HCT116 (cell line): ENCODE measurements at regions of chr6 and their contacts with region 1.

Region 1: GRCh38 chr6:87078983-87079616 is 15.8 kb downstream of the CGA start:
- DNase-seq: peak; percentile 79
- ATAC-seq: peak; percentile 100
- H3K4me3 ChIP-seq: no peak overlapping the region
- H3K27ac ChIP-seq: no peak overlapping the region
- H3K4me1 ChIP-seq: no peaks in the 10 kb centered on the region
- H3K27me3 ChIP-seq: peaks cover 14% of the 10 kb centered on the region; the same call in 1 of the 2 replicates
- CTCF ChIP-seq: peak; percentile 40 to 99 (median 94); a peak in 5 of 6 replicates
- POLR2A ChIP-seq: no peak
- RAD21 ChIP-seq: peak; percentile 46; the same call in 1 of the 2 replicates

Region 2: DNA sequence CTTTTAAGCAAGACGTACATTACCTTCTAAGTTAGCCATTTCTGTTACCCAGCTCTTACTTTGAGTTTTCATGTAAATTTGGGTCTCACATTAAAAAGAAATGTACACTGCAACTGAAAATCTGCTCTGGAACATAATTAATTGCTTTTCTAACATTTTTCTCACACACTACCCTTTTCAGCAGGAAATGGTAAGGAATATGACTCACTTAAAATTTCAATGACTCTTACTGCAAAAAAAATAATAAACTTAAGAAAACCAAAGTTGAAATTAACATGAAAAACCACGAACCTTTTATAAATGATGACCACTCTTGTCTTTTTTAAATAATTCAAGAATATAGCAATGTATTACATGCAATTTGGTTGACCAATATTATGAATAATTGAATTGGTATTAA is 14.6 kb after region 1 on chr6:
- CTCF ChIA-PET with region 1: interaction called, 10 read pairs
- POLR2A ChIA-PET with region 1: no interaction called
- RAD21 ChIA-PET with region 1: no interaction called
- intact Hi-C with region 1: no loop called
- DNase-seq: no peak
- ATAC-seq: no peak
- H3K4me3 ChIP-seq: no peak overlapping the region
- H3K27ac ChIP-seq: no peak overlapping the region
- H3K4me1 ChIP-seq: no peaks in the 10 kb centered on the region
- H3K27me3 ChIP-seq: peaks cover 50% of the 10 kb centered on the region
- CTCF ChIP-seq: no peak
- POLR2A ChIP-seq: no peak
- RAD21 ChIP-seq: no peak

Region 3: DNA sequence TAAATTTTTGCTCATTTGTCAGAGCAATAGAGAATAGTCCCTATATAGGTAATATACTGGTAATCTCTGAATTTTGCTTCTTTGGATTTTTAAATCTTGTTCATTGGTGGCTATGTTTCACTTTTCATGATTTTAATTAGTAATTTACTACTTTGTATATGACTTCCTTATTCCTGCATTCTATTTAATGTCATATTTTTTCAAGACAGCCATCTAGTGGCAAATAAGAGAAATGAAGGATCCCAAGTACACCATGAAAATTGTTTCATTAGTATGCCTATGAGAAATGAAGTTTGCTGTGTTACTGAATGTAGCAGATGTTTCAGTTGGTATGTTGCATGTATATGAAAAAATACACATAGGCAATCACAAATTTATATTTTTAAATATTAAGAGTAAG is 158.7 kb after region 1 on chr6:
- CTCF ChIA-PET with region 1: interaction called, 5 read pairs
- POLR2A ChIA-PET with region 1: no interaction called
- RAD21 ChIA-PET with region 1: no interaction called
- intact Hi-C with region 1: loop called (anchors 10 kb)
- DNase-seq: peak; percentile 18
- ATAC-seq: peak; percentile 77
- H3K4me3 ChIP-seq: no peak overlapping the region
- H3K27ac ChIP-seq: no peak overlapping the region
- H3K4me1 ChIP-seq: no peaks in the 10 kb centered on the region
- H3K27me3 ChIP-seq: no peaks in the 10 kb centered on the region
- CTCF ChIP-seq: peak; percentile 23 to 64 (median 50); a peak in 5 of 6 replicates
- POLR2A ChIP-seq: no peak
- RAD21 ChIP-seq: peak; percentile 40; the same call in 1 of the 2 replicates

Region 4: GRCh38 chr6:87312860-87313259 is 233.8 kb after region 1 on chr6:
- CTCF ChIA-PET with region 1: no interaction called
- POLR2A ChIA-PET with region 1: no interaction called
- RAD21 ChIA-PET with region 1: no interaction called
- intact Hi-C with region 1: no loop called
- DNase-seq: no peak
- ATAC-seq: no peak
- H3K4me3 ChIP-seq: no peak overlapping the region
- H3K27ac ChIP-seq: no peak overlapping the region
- H3K4me1 ChIP-seq: no peaks in the 10 kb centered on the region
- H3K27me3 ChIP-seq: peaks cover 18% of the 10 kb centered on the region; the same call in 1 of the 2 replicates
- CTCF ChIP-seq: no peak
- POLR2A ChIP-seq: no peak
- RAD21 ChIP-seq: no peak

Region 5: GRCh38 chr6:87731818-87732661 is 652.9 kb after region 1 on chr6:
- CTCF ChIA-PET with region 1: no interaction called
- POLR2A ChIA-PET with region 1: no interaction called
- RAD21 ChIA-PET with region 1: no interaction called
- intact Hi-C with region 1: no loop called
- DNase-seq: peak; percentile 76
- ATAC-seq: peak; percentile 82
- H3K4me3 ChIP-seq: peak overlapping the region in 1 of 2 experiments; percentile 42; a peak in 2 of 4 replicates
- H3K27ac ChIP-seq: peak overlapping the region; percentile 21; the same call in 1 of the 2 replicates
- H3K4me1 ChIP-seq: peaks cover 12 to 37% of the 10 kb centered on the region in 2 experiments; a peak in 3 of 4 replicates
- H3K27me3 ChIP-seq: no peaks in the 10 kb centered on the region
- CTCF ChIP-seq: no peak
- POLR2A ChIP-seq: no peak
- RAD21 ChIP-seq: no peak; the same call in 1 of the 2 replicates